Activated CD8-positive, alpha-beta T cell treated with anti-CD3 and anti-CD28 coated beads, Interleukin-2, amount 10 ng/mL, durations not matched to agents 7 days and 5 days (primary cell): ENCODE measurements at regions of chr12 and their contacts with region 1.

Region 1: GRCh38 chr12:12562585-12563261 is at the start of gene DUSP16:
- DNase-seq: peak; percentile 88
- ATAC-seq: peak; percentile 88
- H3K4me3 Mint-ChIP-seq: peak within 1 kb of the TSS; percentile 83
- H3K27ac Mint-ChIP-seq: peak within 1 kb of the TSS; percentile 91
- H3K4me1 Mint-ChIP-seq: peaks cover 35% of the 10 kb centered on the region
- H3K27me3 Mint-ChIP-seq: peaks cover 5% of the 10 kb centered on the region
- total RNA-seq, gene DUSP16: 17.4 to 19.0 TPM

Region 2: GRCh38 chr12:12356886-12357718 is 205.6 kb before region 1 on chr12 and contains the start of gene BORCS5:
- CTCF ChIA-PET with region 1: interaction called, 8 read pairs
- POLR2A ChIA-PET with region 1: interaction called, 14 read pairs
- DNase-seq: peak; percentile 99
- ATAC-seq: peak; percentile 94
- H3K4me3 Mint-ChIP-seq: peak within 1 kb of the TSS; percentile 88
- H3K27ac Mint-ChIP-seq: peak within 1 kb of the TSS; percentile 94
- H3K4me1 Mint-ChIP-seq: peaks cover 48% of the 10 kb centered on the region
- H3K27me3 Mint-ChIP-seq: no peaks in the 10 kb centered on the region
- total RNA-seq, gene BORCS5: 18.8 to 21.2 TPM

Region 3: GRCh38 chr12:12486661-12487240 is 76.0 kb before region 1 on chr12:
- CTCF ChIA-PET with region 1: interaction called, 4 read pairs
- POLR2A ChIA-PET with region 1: interaction called, 17 read pairs
- DNase-seq: no peak
- ATAC-seq: no peak
- H3K4me3 Mint-ChIP-seq: no peak overlapping the region
- H3K27ac Mint-ChIP-seq: no peak overlapping the region
- H3K4me1 Mint-ChIP-seq: peaks cover 39% of the 10 kb centered on the region
- H3K27me3 Mint-ChIP-seq: no peaks in the 10 kb centered on the region

Region 4: GRCh38 chr12:12577786-12578185 is 15.1 kb after region 1 on chr12:
- CTCF ChIA-PET with region 1: interaction called, 13 read pairs
- POLR2A ChIA-PET with region 1: interaction called, 3 read pairs
- DNase-seq: no peak
- ATAC-seq: no peak
- H3K4me3 Mint-ChIP-seq: no peak overlapping the region
- H3K27ac Mint-ChIP-seq: no peak overlapping the region
- H3K4me1 Mint-ChIP-seq: peaks cover 4% of the 10 kb centered on the region
- H3K27me3 Mint-ChIP-seq: peaks cover 2% of the 10 kb centered on the region